ENCODE measurements at regions of chr3 and their contacts with region 1.

Region 1: GRCh38 chr3:32420126-32421038 is 28.7 kb downstream of the CMTM7 start:
- DNase-seq: peak in 1 of 10 donors; percentile 36
- ATAC-seq: peak; percentile 31 to 48
- H3K4me3 Mint-ChIP-seq: peak overlapping the region; percentile 68 to 83 (median 79)
- H3K27ac Mint-ChIP-seq: peak overlapping the region; percentile 93 to 100 (median 97)
- H3K4me1 Mint-ChIP-seq: peaks cover 60 to 100% (median 97%) of the 10 kb centered on the region in 4 donors
- H3K27me3 Mint-ChIP-seq: no peaks in the 10 kb centered on the region

Region 2: GRCh38 chr3:32374788-32375595 is 45.4 kb before region 1 on chr3:
- POLR2A ChIA-PET with region 1: interaction called, 11 read pairs
- DNase-seq: peak; percentile 14 to 87 (median 74)
- ATAC-seq: peak; percentile 26 to 43
- H3K4me3 Mint-ChIP-seq: peak overlapping the region in 2 of 10 donors; percentile 34 to 54
- H3K27ac Mint-ChIP-seq: peak overlapping the region; percentile 1 to 96 (median 86)
- H3K4me1 Mint-ChIP-seq: peaks cover 11 to 44% (median 40%) of the 10 kb centered on the region in 4 donors
- H3K27me3 Mint-ChIP-seq: no peaks in the 10 kb centered on the region

Region 3: GRCh38 chr3:32391643-32392535 is 28.5 kb before region 1 on chr3 and contains the start of gene CMTM7:
- POLR2A ChIA-PET with region 1: interaction called, 12 read pairs
- DNase-seq: peak; percentile 24 to 79 (median 54)
- ATAC-seq: peak; percentile 57 to 68
- H3K4me3 Mint-ChIP-seq: peak within 1 kb of the TSS; percentile 90 to 99 (median 96)
- H3K27ac Mint-ChIP-seq: peak within 1 kb of the TSS; percentile 96 to 100 (median 98)
- H3K4me1 Mint-ChIP-seq: peaks cover 33 to 76% (median 61%) of the 10 kb centered on the region in 4 donors
- H3K27me3 Mint-ChIP-seq: no peaks in the 10 kb centered on the region
- polyA plus RNA-seq, gene CMTM7: 67.4 to 122 (median 98.5) TPM

Region 4: DNA sequence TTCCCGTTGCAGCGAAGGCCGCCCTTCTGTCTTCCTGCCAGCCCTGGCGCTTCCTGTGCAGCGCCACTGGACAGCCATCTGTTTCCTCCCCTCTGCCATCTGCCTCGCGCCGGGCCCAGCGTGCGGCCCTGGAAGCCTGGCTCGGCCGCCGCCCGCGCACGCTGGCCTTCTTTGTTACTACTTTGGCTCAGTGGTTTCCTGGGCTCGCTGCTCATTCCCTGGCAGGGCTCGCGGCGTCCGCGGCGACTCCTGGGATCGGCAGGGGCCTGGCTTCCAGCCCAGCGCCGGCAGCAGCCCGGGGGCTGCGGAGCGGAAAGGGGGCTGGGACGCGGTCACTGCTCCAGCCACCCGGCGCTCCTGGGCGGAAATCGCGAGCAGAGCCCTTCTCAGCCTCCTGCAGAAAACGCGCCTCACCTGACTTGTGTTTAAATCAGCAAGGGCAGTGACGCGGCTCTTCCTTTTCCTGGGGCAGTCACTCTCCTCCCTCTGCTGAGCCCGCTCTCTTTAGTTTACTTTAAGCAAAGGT is 18.8 kb before region 1 on chr3:
- POLR2A ChIA-PET with region 1: interaction called, 52 read pairs
- DNase-seq: peak; percentile 37 to 81 (median 62)
- ATAC-seq: peak; percentile 70 to 78
- H3K4me3 Mint-ChIP-seq: peak overlapping the region; percentile 86 to 96 (median 94)
- H3K27ac Mint-ChIP-seq: peak overlapping the region; percentile 97 to 100 (median 99)
- H3K4me1 Mint-ChIP-seq: peaks cover 33 to 85% (median 83%) of the 10 kb centered on the region in 4 donors
- H3K27me3 Mint-ChIP-seq: no peaks in the 10 kb centered on the region